Activated T-helper 1 cell treated with anti-CD3 and anti-CD28 coated beads, Interleukin-12 subunit alpha, Interleukin-12 subunit beta, Interleukin-2, Interleukin-4 antibody, amounts not matched to agents 30 ng/mL and 10 ng/mL and 1 ng/mL, durations not matched to agents 14 hours and 24 hours and 36 hours (primary cell): ENCODE measurements at regions of chr5 and their contacts with region 1.

Region 1: DNA sequence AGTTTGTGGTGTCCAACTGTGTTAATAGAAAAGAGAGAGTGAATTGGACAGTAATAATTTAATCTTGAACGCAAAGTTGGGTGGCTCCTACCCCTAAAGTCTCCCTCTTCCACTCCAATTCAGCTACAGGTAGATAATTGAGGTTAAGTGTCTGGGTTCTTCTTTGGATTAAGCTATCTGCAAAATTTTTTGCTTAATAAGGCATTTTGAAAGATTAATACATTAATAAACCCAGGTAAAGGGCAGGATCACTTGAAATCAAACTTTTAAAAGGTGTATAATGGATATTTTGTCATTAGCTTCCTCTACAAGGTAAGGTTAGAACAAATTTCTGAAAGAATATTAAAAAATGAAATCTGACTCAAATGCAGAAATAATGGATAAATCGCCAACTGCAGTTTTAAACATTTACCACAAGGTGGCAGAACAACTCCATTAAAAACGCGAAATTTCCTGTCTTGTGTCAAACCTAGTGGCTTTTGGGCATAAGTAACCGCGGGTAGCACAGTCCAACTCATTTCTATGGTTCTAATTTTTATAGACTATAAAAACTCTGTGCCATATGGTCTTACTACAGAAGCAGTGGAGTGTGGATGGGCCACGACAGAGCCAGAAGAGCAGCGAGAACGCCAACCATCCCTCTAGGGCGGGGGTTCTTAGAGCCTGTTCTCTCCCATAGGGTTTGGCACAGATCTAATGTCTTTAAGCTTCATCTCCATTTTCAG is 276.5 kb downstream of the ARHGEF28 start:
- DNase-seq: no peak
- H3K4me3 Mint-ChIP-seq: no peak overlapping the region
- H3K27ac Mint-ChIP-seq: no peak overlapping the region
- H3K4me1 Mint-ChIP-seq: peaks cover 14% of the 10 kb centered on the region
- H3K27me3 Mint-ChIP-seq: peaks cover 38% of the 10 kb centered on the region

Region 2: DNA sequence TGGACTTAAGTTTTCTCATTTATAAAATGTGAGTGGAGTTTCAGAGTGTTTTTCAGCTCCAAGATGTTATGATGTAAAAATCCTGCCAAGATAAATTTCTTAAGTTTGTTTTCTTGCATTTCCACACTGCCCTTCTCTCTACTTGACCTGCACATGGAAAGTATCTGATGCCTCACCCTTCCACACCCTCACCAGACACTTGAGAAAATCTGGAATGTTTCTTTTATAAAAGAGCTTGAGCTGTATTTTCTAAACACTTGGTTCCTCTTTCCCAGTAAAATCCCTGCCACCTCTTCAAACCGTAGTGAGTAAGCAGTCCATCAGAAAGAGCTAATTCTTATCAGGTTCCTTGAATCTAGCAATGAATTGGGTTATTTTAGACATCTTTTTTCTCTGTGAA is 496.8 kb before region 1 on chr5:
- intact Hi-C with region 1: no loop called
- DNase-seq: no peak
- H3K4me3 Mint-ChIP-seq: no peak overlapping the region
- H3K27ac Mint-ChIP-seq: no peak overlapping the region
- H3K4me1 Mint-ChIP-seq: no peaks in the 10 kb centered on the region
- H3K27me3 Mint-ChIP-seq: peaks cover 32% of the 10 kb centered on the region

Region 3: GRCh38 chr5:73591102-73591695 is 311.3 kb before region 1 on chr5:
- intact Hi-C with region 1: loop called (anchors 10 kb)
- DNase-seq: peak; percentile 38
- H3K4me3 Mint-ChIP-seq: no peak overlapping the region
- H3K27ac Mint-ChIP-seq: no peak overlapping the region
- H3K4me1 Mint-ChIP-seq: no peaks in the 10 kb centered on the region
- H3K27me3 Mint-ChIP-seq: peaks cover 9% of the 10 kb centered on the region

Region 4: GRCh38 chr5:74316064-74316679 is 413.7 kb after region 1 on chr5:
- intact Hi-C with region 1: loop called (anchors 5 kb)
- DNase-seq: no peak
- H3K4me3 Mint-ChIP-seq: no peak overlapping the region
- H3K27ac Mint-ChIP-seq: no peak overlapping the region
- H3K4me1 Mint-ChIP-seq: no peaks in the 10 kb centered on the region
- H3K27me3 Mint-ChIP-seq: peaks cover 15% of the 10 kb centered on the region

Region 5: GRCh38 chr5:74684900-74685851 is 782.7 kb after region 1 on chr5 and contains the start of gene HEXB:
- intact Hi-C with region 1: loop called (anchors 1 kb)
- DNase-seq: peak; percentile 83
- H3K4me3 Mint-ChIP-seq: peak within 1 kb of the TSS; percentile 90
- H3K27ac Mint-ChIP-seq: peak within 1 kb of the TSS; percentile 71
- H3K4me1 Mint-ChIP-seq: peaks cover 23% of the 10 kb centered on the region
- H3K27me3 Mint-ChIP-seq: peaks cover 14% of the 10 kb centered on the region
- total RNA-seq, gene HEXB: 62.7 and 71.4 TPM in 2 replicates

Region 6: GRCh38 chr5:74934949-74935751 is 1032.7 kb after region 1 on chr5:
- intact Hi-C with region 1: loop called (anchors 5 kb)
- DNase-seq: peak; percentile 29
- H3K4me3 Mint-ChIP-seq: peak overlapping the region; percentile 50
- H3K27ac Mint-ChIP-seq: peak overlapping the region; percentile 42
- H3K4me1 Mint-ChIP-seq: peaks cover 38% of the 10 kb centered on the region
- H3K27me3 Mint-ChIP-seq: peaks cover 2% of the 10 kb centered on the region